Endothelial cell of umbilical vein (primary cell): ENCODE measurements at regions of chr19 and their contacts with region 1.

Region 1: DNA sequence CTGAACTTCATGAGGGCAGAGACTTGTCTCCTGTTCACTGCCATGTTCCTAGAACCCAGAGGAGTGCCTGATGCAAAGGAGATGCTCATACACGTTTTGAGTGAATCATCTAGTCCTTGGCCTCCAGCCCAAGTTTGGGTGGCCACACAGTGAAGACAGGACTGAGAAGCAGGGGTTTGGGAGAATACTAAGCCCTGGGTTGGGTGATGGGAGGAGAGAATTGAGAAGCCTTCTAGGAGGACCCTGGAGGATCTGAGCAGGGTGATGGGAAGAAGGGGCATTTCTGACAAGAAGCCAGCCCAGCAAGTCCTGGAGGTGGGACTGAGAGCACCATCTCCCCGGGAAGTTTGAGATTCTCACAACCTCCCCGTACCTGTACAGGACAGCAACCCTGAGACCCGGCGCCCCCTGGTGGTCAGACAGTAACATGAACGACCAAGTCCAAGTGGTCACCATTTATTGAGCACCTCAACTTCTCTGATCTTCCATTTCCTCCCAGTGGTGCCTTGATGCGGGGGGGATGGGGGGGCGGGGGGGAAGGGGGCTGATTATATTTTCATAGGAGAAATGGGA is 11.0 kb downstream of the CTU1 start:
- DNase-seq: peak; percentile 27
- H3K4me3 ChIP-seq: no peak overlapping the region
- H3K27ac ChIP-seq: no peak overlapping the region
- H3K4me1 ChIP-seq: peaks cover 16% of the 10 kb centered on the region
- H3K27me3 ChIP-seq: no peaks in the 10 kb centered on the region
- CTCF ChIP-seq: peak; percentile 47 to 69
- POLR2A ChIP-seq: no peak

Region 2: DNA sequence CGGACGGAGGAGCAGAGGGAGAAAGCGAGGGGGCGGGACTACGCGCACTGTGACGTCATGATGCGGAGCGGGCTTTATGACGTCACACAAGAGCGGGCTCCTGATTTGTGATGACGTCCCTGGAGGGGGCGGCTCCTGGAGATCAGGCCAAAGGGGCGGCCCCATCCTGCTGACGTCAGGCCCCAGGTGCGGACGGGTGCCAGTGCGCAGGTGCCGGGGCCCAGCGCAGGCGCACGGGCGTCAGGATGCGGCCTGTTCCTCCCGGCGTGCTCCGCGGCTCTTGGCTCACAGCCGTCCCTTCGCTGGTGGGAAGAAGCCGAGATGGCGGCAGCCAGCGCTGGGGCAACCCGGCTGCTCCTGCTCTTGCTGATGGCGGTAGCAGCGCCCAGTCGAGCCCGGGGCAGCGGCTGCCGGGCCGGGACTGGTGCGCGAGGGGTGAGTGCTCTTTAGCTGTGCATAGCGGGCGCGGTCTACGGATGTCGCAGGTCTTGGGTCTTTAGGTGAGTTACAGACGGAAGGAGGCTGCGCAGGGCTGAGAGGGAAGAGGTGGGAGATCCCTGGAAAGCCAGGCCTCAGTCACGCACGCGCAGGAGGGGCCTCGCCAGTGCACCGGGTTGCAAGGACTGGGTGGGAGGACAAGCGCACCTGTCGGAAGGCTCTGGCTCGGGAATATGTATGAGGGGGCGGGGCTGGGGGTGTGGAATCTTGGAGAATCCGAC is 620.9 kb before region 1 on chr19 and contains the starts of genes EMC10 and GARIN5A:
- CTCF ChIA-PET with region 1: no interaction called
- POLR2A ChIA-PET with region 1: no interaction called
- dilution Hi-C with region 1: no loop called
- intact Hi-C with region 1: loop called (anchors 5 kb)
- DNase-seq: peak; percentile 94
- H3K4me3 ChIP-seq: peak within 1 kb of the TSS; percentile 84 to 98 (median 87)
- H3K27ac ChIP-seq: peak within 1 kb of the TSS; percentile 48
- H3K4me1 ChIP-seq: peaks cover 7% of the 10 kb centered on the region
- H3K27me3 ChIP-seq: no peaks in the 10 kb centered on the region
- CTCF ChIP-seq: no peak
- POLR2A ChIP-seq: peak; percentile 96
- total RNA-seq, gene EMC10: 101 and 106 TPM in 2 replicates
- total RNA-seq, gene GARIN5A: 0.44 and 0.62 TPM in 2 replicates

Region 3: DNA sequence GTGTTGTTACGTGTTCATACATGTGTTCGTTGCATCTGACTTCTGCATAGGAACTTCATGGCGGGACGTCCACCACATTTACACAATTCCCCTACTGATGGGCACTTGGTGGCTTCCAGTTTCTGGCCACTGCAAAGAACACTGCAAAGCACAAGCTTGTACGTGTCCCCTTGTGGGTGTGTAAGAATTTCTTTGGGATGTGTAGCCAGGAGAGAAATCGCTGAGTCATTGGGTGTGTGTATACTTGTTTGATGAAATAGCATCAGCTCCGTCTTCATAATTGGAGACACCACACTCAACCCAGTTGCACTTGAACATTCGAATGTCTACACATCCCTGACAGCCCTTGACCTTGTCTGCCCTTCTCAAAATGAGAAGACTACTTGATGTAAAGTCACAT is 163.6 kb before region 1 on chr19:
- CTCF ChIA-PET with region 1: interaction called, 7 read pairs
- POLR2A ChIA-PET with region 1: no interaction called
- dilution Hi-C with region 1: no loop called
- intact Hi-C with region 1: loop called (anchors 1 kb)
- DNase-seq: no peak
- H3K4me3 ChIP-seq: no peak overlapping the region
- H3K27ac ChIP-seq: no peak overlapping the region
- H3K4me1 ChIP-seq: no peaks in the 10 kb centered on the region
- H3K27me3 ChIP-seq: peaks cover 0 to 2% of the 10 kb centered on the region in 2 experiments
- CTCF ChIP-seq: no peak
- POLR2A ChIP-seq: no peak

Region 4: DNA sequence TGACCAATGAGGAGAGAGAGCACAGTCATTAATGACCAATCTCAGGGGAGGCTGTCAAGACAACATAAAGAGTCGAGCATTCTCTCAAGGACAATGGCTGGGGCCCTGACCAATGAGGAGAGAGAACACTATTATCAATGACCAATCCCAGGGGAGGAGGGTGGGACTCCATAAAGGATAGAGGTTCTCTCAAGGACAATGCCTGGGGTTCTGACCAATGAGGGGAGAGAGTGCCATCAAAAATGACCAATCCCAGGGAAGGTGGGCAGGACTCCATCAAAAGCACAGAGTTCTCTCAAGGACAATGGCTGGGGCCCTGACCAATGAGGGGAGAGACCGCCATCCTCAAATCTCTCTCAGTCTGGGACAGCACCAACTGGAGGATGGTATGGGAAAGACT is 67.5 kb before region 1 on chr19:
- CTCF ChIA-PET with region 1: no interaction called
- POLR2A ChIA-PET with region 1: no interaction called
- dilution Hi-C with region 1: no loop called
- intact Hi-C with region 1: no loop called
- DNase-seq: no peak
- H3K4me3 ChIP-seq: no peak overlapping the region
- H3K27ac ChIP-seq: no peak overlapping the region
- H3K4me1 ChIP-seq: no peaks in the 10 kb centered on the region
- H3K27me3 ChIP-seq: no peaks in the 10 kb centered on the region
- CTCF ChIP-seq: no peak
- POLR2A ChIP-seq: no peak

Region 5: GRCh38 chr19:51108066-51108804 is 11.0 kb after region 1 on chr19 and contains the start of gene CTU1:
- CTCF ChIA-PET with region 1: interaction called, 7 read pairs
- POLR2A ChIA-PET with region 1: no interaction called
- dilution Hi-C with region 1: no loop called
- intact Hi-C with region 1: loop called (anchors 1 kb)
- DNase-seq: peak; percentile 99
- H3K4me3 ChIP-seq: peak within 1 kb of the TSS; percentile 56 to 65 (median 64)
- H3K27ac ChIP-seq: peak within 1 kb of the TSS; percentile 51
- H3K4me1 ChIP-seq: peaks cover 11% of the 10 kb centered on the region
- H3K27me3 ChIP-seq: peaks cover 0 to 9% of the 10 kb centered on the region in 2 experiments
- CTCF ChIP-seq: no peak
- POLR2A ChIP-seq: peak; percentile 89
- total RNA-seq, gene CTU1: 8.2 and 8.7 TPM in 2 replicates

Region 6: GRCh38 chr19:51131780-51132680 is 34.8 kb after region 1 on chr19:
- CTCF ChIA-PET with region 1: no interaction called
- POLR2A ChIA-PET with region 1: no interaction called
- dilution Hi-C with region 1: no loop called
- intact Hi-C with region 1: no loop called
- DNase-seq: peak; percentile 80
- H3K4me3 ChIP-seq: no peak overlapping the region
- H3K27ac ChIP-seq: no peak overlapping the region
- H3K4me1 ChIP-seq: peaks cover 8% of the 10 kb centered on the region
- H3K27me3 ChIP-seq: peaks cover 0 to 5% of the 10 kb centered on the region in 2 experiments
- CTCF ChIP-seq: no peak
- POLR2A ChIP-seq: no peak